WTC11 (cell line): ENCODE measurements at regions of chr3 and their contacts with region 1.

Region 1: DNA sequence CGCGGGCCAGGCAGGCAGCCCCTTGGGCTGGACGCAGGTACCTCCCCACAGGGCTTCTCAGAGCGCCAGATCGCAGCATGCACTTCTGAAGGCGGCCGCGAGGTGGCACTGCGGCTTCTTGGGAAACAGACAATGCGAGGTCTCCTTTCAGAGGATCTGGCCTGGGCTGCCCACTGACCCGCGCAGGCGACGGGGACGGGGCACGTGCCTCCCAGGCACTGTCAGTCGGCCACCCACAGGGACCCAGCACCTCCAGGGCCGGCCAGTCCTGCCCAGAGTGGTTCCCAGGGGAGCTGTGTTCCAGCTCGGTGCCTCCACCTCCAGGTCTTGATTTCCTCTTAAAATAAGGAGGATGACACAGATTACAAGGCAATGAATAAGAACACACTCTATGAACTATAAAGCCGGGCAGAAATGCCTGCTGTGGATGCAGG is 24.4 kb upstream of the TXNRD3 start:
- DNase-seq: peak; percentile 96
- ATAC-seq: peak; percentile 92
- H3K4me3 Mint-ChIP-seq: peak overlapping the region; percentile 54
- H3K27ac Mint-ChIP-seq: no peak overlapping the region
- H3K4me1 Mint-ChIP-seq: peaks cover 22% of the 10 kb centered on the region
- H3K27me3 Mint-ChIP-seq: peaks cover 31% of the 10 kb centered on the region
- CTCF ChIP-seq: peak; percentile 95

Region 2: DNA sequence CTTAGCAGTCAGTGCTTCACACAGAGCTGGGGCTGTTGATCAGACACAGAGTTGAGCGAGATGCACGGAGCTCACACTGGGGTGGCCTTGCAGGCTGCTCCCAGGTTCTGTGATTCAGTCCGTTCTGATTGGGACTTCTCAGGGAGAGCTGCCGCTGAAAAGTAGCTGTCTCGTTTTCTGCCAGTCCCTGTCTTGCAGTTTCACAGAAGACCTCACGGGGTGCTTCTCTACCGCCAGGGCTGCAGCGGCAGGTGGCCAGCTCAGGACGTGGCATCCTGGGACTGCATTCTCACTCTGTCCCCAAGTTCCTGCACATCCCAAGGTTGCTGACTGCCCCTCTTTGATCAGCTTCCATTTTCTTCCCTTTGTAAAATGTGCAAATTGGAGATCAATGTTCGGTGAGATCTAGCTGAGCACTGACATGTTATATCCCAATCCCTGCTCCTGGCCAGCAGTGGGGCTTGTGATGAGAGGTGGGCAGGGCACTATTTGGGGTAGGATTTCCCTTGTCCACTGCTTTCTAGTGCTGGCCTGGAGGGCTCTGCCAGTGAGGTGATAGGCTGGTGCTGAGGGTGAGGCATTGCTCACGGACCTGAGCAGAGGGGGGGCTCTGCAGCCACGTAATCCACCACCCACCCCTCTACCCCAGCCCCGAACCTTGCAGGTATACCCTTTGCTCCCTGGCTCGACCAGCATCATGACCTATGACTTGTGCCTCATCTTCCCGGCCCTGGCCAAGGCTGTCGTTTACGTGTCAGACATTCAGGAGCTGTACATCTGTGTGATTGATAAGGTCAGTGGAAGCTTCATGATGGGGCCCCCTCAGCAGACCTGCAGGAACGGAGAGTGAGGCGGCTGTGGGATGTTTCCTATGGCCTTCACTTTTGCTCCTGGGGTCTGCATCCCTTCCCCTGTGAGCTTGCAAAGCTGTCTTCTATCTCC is 19.1 kb before region 1 on chr3:
- CTCF ChIA-PET with region 1: interaction called, 13 read pairs
- POLR2A ChIA-PET with region 1: interaction called, 3 read pairs
- DNase-seq: peak; percentile 41
- ATAC-seq: peak; percentile 61
- H3K4me3 Mint-ChIP-seq: no peak overlapping the region
- H3K27ac Mint-ChIP-seq: no peak overlapping the region
- H3K4me1 Mint-ChIP-seq: no peaks in the 10 kb centered on the region
- H3K27me3 Mint-ChIP-seq: peaks cover 22% of the 10 kb centered on the region
- CTCF ChIP-seq: no peak

Region 3: DNA sequence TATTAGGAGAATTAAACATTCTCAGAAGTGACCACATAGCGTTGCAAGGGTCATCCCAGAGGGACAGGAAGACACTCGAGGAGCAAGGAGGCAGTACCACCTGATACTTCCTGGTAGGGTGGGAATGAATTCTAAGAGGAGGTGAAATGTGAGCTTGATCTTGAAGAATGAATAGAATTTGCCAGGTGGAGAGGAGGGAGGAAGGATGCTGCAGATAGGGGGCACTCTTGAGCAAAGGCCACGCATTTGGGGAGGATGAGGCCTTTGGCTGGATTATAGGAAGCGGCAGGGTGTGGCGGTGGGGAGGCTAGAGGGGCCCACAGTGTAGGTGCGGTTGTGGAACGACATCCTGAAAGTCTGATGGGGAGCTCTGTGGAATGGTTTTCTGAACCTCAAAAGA is 58.2 kb after region 1 on chr3:
- CTCF ChIA-PET with region 1: interaction called, 16 read pairs
- POLR2A ChIA-PET with region 1: no interaction called
- DNase-seq: peak; percentile 51
- ATAC-seq: peak; percentile 63
- H3K4me3 Mint-ChIP-seq: no peak overlapping the region
- H3K27ac Mint-ChIP-seq: no peak overlapping the region
- H3K4me1 Mint-ChIP-seq: no peaks in the 10 kb centered on the region; the same call in 1 of the 2 replicates
- H3K27me3 Mint-ChIP-seq: no peaks in the 10 kb centered on the region
- CTCF ChIP-seq: peak; percentile 36

Region 4: DNA sequence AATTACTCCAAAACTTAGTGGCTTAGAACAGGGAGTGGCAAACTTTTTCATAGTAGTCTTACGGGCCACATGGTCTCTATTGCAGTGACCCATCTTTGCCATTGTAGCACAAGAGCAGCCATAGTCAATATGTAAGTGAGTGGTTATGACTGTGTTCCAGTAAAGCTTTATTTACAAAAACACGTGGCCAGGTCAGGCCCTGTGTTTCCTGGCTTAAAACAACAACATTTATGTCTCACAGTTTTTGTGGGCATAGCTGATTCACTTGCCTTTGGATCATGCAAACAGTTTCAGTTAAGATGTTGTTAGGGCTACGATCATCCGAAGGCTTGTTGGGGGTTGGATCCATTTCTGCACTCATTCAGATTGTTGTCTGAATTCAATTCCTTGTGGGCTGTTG is 128.5 kb after region 1 on chr3:
- CTCF ChIA-PET with region 1: no interaction called
- POLR2A ChIA-PET with region 1: no interaction called
- DNase-seq: no peak
- ATAC-seq: no peak
- H3K4me3 Mint-ChIP-seq: no peak overlapping the region
- H3K27ac Mint-ChIP-seq: no peak overlapping the region
- H3K4me1 Mint-ChIP-seq: peaks cover 6% of the 10 kb centered on the region; the same call in 1 of the 2 replicates
- H3K27me3 Mint-ChIP-seq: no peaks in the 10 kb centered on the region
- CTCF ChIP-seq: no peak

Region 5: DNA sequence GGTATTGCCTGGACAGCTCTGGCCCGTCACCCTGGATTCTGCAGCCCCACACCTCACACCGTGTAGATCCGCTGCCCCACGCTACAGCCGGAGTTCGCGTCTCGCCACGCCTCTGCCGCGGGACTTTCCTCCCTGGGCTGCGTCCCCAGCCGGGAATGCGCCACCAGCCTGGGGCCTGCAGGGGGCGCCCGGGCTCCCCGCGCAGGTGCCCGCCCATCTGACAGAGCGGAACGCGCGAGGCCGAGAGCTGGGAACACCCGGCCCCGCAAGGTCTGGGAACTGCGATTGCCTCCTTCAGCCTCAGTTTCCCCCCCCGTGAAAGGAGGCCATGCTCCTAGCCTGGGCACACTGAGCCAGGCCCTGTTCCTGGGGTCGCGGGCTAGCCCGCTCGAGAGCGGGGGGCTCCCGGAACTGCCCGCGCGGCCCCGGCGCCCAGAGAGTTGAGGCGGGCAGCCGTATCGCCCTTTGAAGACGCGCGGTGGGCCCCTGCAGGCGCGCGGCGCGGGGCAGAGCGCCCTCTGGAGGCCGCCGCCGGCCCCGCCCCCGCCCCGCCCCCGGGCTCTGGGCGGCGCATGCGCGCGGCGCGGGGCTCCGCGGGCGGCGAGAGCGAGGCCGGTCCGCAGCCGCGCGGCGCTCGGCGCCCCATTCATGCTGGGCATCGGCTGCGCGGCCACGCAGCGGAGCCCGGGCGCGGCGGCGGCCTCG is 303.3 kb after region 1 on chr3 and contains the start of gene PLXNA1:
- CTCF ChIA-PET with region 1: interaction called, 18 read pairs
- POLR2A ChIA-PET with region 1: no interaction called
- DNase-seq: peak; percentile 79
- ATAC-seq: peak; percentile 56
- H3K4me3 Mint-ChIP-seq: peak within 1 kb of the TSS; percentile 73
- H3K27ac Mint-ChIP-seq: no peak within 1 kb of the TSS
- H3K4me1 Mint-ChIP-seq: peaks cover 9% of the 10 kb centered on the region
- H3K27me3 Mint-ChIP-seq: peaks cover 21% of the 10 kb centered on the region
- CTCF ChIP-seq: peak; percentile 94
- total RNA-seq, gene PLXNA1: 53.0 to 55.0 TPM (median 53.8 TPM) in 3 replicates